Astrocyte of the cerebellum (primary cell): ENCODE measurements at regions of chr17 and their contacts with region 1.

Region 1: GRCh38 chr17:20908373-20909273 is 134.2 kb downstream of the USP22 start:
- DNase-seq: no peak
- H3K4me3 ChIP-seq: peak overlapping the region; percentile 42
- CTCF ChIP-seq: peak; percentile 86

Region 2: DNA sequence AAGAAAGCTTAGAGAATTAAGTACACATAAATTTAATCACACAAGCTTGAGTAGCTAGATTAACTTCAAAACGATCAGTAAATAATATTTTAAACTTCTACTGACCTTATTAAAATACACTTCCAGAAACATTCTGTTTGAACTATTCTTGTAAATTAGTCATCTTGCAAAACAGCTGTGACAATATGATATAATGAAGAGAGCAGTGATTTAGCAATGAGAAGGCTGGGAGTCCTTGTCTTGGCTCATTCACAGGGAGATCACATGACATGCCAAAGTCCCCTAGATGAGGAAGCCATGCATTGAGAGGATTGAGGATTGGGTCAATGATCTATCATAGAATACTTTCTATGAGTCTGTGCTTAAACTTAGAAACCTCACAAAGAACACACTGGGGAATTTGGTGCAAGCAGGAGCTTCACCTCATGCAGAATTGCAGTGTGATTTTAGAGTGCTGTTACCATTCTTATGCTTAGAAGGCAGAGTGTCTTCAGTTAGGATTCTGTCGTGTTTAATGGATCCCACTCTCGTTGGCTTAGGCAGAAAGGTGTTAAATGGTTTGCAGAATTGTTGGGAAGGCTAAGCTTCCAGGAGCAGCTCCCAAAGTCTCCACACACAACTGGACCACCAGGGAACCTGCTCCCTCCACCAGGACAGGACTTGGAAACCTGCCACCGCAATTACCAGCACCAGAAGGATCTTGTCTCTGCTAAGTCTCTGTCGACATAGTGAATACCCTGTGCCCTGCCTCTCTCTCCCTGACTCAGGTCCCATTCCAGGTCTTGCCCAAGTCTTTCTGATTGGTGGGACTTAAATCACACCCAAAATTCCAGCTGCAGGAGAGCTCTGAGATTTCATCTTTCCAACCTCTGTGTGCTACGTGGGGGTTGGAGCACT is 47.1 kb after region 1 on chr17:
- in situ Hi-C with region 1: no loop called
- DNase-seq: no peak
- H3K4me3 ChIP-seq: no peak overlapping the region
- CTCF ChIP-seq: no peak

Region 3: GRCh38 chr17:20966870-20967269 is 58.2 kb after region 1 on chr17:
- in situ Hi-C with region 1: no loop called
- DNase-seq: no peak
- H3K4me3 ChIP-seq: no peak overlapping the region
- CTCF ChIP-seq: no peak

Region 4: DNA sequence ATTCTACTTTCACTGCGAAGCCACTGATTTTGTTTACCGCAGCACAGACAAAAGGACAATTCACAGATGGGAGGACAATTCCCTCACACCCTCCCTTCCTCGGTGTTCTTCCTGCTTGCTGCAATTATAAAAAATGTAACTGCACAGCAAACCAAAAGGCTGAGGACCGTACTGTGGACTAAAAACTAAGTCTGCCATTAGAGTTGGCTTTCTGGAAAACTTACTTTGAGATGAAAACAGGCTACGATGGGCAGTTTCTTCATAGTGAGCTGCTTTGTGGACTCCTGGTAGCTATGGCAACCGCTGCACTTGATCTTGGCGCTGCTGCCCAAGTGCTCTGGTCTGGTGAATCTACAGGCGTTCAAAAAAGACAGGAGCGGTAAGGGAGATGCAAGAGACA is 99.0 kb after region 1 on chr17:
- in situ Hi-C with region 1: loop called (anchors 5 kb)
- DNase-seq: no peak
- H3K4me3 ChIP-seq: no peak overlapping the region
- CTCF ChIP-seq: no peak